Lower leg skin (tissue), 4 donors: ENCODE measurements at regions of chr6 and their contacts with region 1.

Region 1: DNA sequence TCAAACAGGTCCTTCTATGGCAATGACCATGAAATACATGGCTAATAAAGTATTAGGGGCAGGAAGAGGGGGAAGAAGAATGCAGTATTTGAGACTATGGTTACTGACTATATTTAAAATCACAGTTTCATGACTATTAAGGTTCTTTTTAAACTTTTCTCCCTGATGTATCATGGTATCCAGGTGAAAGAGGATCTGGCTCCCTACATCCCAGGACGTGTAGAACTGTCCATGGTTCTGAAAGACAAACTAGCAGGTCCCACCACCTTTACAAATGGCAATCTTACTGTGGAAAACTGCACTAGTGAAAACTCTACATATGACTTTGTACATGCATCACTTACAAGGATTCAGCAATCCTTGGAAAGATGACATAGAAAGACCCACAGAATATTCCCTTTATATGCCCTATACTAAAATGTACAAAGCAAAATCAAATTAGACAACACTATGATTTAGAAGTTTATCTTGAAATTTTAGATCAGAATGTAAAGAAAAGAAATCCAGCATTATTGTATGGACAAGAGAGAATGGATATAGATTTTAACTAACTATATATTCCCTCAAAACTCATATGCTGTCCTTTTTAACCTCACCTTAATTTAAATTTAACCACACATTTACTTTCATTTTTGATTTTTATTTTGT is 33.5 kb downstream of the RPP21 start:
- DNase-seq: no peak
- H3K4me3 ChIP-seq: no peak overlapping the region
- CTCF ChIP-seq: no peak
- POLR2A ChIP-seq: no peak

Region 2: DNA sequence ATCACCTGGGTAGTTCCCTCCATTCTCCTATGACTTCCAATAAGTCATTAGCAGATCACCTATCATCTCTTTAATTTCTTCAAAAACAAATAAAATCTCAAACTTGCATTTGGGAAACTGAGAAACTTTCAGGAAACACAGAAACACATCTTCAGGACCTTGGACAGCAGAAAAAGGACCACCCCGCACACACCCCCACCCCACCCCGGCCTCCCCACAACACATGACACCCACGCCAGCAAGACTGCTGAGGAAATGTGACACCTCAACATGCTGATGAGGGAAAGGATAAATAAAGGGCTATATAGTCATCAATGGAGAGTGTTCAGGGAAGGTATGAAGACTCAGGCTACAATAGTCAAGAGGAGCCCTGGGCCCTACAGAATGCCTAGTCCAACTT is 67.3 kb before region 1 on chr6:
- intact Hi-C with region 1: loop called (anchors 2 kb)
- DNase-seq: no peak
- H3K4me3 ChIP-seq: no peak overlapping the region
- CTCF ChIP-seq: no peak
- POLR2A ChIP-seq: no peak